Activated B cell treated with CpG ODN at 0.5 μM for 24 hours (primary cell): ENCODE measurements at regions of chr10 and their contacts with region 1.

Region 1: DNA sequence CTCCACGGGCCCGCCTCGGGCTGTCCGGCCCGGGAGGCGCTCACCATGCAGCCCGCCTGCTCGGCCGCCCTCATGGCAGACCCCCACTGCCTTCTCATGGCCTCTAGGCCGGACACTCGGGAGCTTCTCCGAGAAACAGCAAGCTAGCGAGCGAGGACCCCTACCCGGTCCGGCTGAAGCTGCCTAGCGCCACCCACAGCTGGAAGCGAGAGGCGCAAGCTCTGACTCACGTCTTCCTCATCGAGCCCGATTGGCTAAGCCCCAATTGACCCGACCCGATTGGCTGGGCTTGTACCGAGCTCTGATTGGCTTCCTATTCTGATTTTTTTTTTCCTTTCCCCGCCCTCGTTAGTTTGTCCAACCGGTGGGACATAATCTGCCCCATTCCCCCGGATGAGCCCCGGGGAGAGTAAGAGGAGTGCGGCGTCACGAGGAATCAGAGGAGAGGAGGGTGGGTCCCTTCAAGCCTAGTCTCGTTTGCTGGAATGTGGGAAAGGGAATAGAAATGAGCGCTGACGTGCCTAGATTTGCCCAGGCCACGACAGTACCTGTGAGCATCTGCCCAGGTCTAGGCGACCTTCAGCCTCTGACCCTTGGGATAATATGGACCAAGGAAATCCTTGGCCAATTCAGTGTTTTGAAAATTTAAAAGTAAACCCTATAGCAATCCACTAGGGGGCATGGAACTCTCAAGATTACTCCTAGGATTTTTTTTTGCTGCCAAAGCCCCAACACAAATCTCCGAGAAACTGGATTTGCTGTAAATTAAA is at the start of gene TYSND1:
- DNase-seq: no peak
- ATAC-seq: peak; percentile 80
- H3K4me3 Mint-ChIP-seq: peak within 1 kb of the TSS; percentile 95
- H3K27ac Mint-ChIP-seq: peak within 1 kb of the TSS; percentile 96
- H3K4me1 Mint-ChIP-seq: peaks cover 27% of the 10 kb centered on the region
- H3K27me3 Mint-ChIP-seq: no peaks in the 10 kb centered on the region
- CTCF ChIP-seq: no peak
- total RNA-seq, gene TYSND1: 18.2 and 22.0 TPM in 2 replicates

Region 2: DNA sequence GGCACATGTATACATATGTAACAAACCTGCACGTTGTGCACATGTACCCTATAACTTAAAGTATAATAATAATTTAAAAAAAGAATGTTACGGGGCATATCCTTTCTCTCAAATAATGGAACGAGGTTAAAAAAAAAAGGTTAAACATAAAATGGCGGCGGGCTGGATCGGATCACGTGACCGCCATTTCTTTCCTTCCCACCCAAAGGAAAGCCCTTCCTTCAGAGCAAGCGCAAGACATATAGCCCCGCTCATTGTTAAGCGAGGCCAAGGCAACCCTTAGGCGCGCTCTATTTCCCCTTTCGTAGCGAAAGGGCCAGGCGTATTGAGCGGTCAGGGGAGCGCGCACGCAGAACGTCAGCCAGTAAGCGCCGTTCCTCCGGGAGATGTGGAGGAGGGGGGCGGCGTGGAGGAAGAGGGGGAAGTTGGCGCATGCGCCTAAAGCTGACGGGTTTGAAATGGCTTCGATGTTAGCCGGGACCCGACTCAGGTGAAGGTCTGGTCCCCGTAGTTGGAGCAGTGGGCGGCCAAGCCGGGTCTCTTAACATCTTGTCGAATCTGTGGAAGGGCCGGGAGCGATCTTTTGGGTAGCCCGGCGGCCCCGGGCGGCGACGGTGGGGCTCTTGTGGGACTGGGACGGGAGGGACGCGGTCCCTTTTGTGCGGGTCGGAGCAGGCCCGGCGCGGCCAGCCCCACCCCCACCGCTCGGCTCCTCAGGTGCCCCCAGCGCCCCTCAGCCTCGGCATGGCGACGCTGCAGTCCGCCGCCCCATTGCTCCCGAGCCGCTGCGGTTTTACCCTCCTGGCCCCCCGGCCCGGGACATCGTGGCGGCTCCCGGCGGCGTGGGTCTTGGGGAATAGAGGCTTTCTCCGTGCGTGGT is 1425.6 kb before region 1 on chr10 and contains the start of gene CCAR1:
- CTCF ChIA-PET with region 1: no interaction called
- POLR2A ChIA-PET with region 1: no interaction called
- intact Hi-C with region 1: loop called (anchors 5 kb)
- DNase-seq: peak; percentile 93
- ATAC-seq: peak; percentile 98
- H3K4me3 Mint-ChIP-seq: peak within 1 kb of the TSS; percentile 92
- H3K27ac Mint-ChIP-seq: peak within 1 kb of the TSS; percentile 98
- H3K4me1 Mint-ChIP-seq: peaks cover 14% of the 10 kb centered on the region
- H3K27me3 Mint-ChIP-seq: no peaks in the 10 kb centered on the region
- CTCF ChIP-seq: no peak
- total RNA-seq, gene CCAR1: 88.2 and 98.8 TPM in 2 replicates

Region 3: DNA sequence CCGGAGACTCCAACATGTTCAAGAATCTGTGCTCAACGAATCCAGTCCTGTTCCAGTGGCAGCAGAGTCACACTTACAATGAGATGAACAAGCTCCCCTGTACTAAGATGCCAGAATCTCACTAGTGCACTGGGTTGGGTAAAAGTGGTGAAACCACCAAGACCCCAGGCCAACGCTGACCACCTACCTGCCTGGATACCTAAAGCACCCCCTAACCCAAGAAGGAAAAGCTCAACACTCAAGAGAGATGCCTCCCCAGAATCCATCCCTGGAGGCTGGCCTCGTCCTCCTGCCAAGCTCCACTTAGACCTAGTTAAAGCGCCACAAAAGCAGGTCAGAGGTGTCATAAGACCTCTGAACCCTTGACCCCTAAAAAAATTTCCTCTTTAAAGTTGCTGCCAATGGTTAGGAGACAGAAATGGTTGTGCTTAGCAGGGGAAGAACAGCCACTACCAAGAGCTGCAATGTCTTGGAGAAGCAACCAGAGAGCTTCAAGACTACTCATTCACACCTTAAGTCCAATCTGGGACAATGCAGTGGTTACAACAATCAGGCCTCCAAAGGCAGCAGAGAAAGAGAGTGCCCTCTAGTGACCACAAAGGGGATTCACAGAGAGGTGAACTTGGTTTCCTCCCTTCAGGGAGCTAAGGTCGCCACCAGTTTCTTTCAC is 188.7 kb before region 1 on chr10:
- CTCF ChIA-PET with region 1: interaction called, 7 read pairs
- POLR2A ChIA-PET with region 1: no interaction called
- intact Hi-C with region 1: loop called (anchors 5 kb)
- DNase-seq: no peak
- ATAC-seq: no peak
- H3K4me3 Mint-ChIP-seq: no peak overlapping the region
- H3K27ac Mint-ChIP-seq: no peak overlapping the region
- H3K4me1 Mint-ChIP-seq: peaks cover 39% of the 10 kb centered on the region
- H3K27me3 Mint-ChIP-seq: no peaks in the 10 kb centered on the region
- CTCF ChIP-seq: no peak

Region 4: DNA sequence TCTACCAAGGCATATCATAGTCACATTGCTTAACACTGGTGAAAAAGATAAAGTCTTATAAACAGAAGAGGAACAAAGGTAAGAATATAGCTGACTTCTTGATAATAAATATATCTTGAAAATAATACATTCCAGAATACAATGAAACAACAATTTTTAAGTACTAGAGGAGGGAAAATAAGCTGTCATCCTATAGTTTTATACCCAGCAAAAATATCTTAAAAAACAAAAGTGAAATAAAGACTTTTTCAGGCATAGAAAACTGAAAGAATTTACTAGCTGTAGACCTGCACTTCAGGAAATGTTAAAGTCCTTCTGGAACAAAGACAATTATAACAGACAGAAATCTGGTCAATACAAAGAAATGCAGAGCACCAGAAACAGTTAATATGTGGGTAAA is 115.5 kb before region 1 on chr10:
- CTCF ChIA-PET with region 1: no interaction called
- POLR2A ChIA-PET with region 1: no interaction called
- intact Hi-C with region 1: no loop called
- DNase-seq: no peak
- ATAC-seq: no peak
- H3K4me3 Mint-ChIP-seq: no peak overlapping the region
- H3K27ac Mint-ChIP-seq: no peak overlapping the region
- H3K4me1 Mint-ChIP-seq: no peaks in the 10 kb centered on the region
- H3K27me3 Mint-ChIP-seq: peaks cover 10% of the 10 kb centered on the region
- CTCF ChIP-seq: no peak

Region 5: DNA sequence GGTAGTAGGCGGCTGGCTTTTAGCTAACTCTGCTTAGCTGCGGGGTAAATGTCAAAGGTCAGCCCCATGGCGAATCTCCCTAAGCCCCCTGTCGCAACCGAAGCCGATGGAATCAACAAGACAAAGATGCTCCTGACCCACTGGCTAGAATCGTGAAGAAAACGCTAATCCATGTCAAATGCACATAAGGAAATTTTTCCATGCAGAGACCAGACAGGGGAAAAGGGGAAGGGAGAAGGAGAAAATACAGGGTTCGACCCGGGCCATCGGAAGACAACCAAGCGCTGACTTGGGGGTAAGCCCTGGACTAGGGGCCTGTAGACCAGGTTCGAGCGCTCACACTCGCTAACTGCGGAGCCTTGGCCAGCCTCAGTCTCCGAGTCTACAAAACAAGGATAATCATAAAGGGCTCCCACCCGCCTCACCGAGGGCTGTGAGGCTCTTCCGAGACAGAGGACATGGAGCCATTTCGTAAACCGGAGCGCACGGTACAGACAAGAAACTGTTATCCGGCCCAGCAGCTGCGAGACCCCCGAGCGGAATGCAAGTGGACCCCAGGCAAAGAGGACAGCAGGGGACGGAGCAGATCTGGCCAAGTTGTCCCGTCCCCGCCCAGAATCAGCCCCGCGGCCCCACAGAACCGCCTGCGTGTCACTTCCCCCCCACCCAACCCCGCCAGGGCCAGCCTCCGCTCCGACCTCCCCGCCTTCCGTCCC is 23.1 kb after region 1 on chr10:
- CTCF ChIA-PET with region 1: interaction called, 17 read pairs
- POLR2A ChIA-PET with region 1: interaction called, 106 read pairs
- intact Hi-C with region 1: loop called (anchors 1 kb)
- DNase-seq: no peak
- ATAC-seq: peak; percentile 29
- H3K4me3 Mint-ChIP-seq: peak overlapping the region; percentile 94
- H3K27ac Mint-ChIP-seq: peak overlapping the region; percentile 93
- H3K4me1 Mint-ChIP-seq: peaks cover 43% of the 10 kb centered on the region
- H3K27me3 Mint-ChIP-seq: no peaks in the 10 kb centered on the region
- CTCF ChIP-seq: no peak

Region 6: DNA sequence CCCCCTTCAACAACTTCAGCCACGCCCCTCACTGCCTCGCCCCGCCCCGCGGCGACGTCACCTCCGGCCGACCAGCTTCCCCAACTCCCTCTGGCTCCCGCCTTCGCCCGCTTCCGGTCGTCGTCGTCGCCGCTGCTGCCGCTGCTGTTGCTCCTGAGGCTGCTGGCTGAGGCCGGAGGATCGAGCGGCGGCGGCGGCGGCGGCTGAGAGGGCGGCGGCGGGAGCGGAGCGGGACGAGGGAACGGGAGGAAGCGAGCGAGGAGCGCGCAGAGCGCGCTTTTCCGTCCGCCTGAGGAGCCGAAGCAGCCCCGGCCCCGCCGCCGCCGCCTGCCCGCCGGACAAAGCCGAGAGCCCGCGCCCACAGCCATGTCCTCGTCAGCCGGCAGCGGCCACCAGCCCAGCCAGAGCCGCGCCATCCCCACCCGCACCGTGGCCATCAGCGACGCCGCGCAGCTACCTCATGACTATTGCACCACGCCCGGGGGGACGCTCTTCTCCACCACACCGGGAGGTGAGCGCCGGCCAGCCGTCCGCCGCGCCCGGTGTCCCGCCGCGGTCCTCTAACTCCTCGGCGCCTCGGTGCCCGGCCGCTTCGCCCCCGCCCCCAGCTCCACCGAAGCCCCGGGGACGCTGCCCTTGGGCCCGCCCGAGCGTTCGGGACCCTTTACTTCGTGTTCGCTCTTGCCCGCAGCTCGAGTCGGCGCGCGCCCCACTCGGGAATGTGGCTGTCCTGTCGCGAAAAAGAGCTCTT is 257.5 kb after region 1 on chr10 and contains the start of gene EIF4EBP2:
- CTCF ChIA-PET with region 1: interaction called, 9 read pairs
- POLR2A ChIA-PET with region 1: interaction called, 4 read pairs
- intact Hi-C with region 1: loop called (anchors 1 kb)
- DNase-seq: peak; percentile 100
- ATAC-seq: peak; percentile 98
- H3K4me3 Mint-ChIP-seq: peak within 1 kb of the TSS; percentile 92
- H3K27ac Mint-ChIP-seq: peak within 1 kb of the TSS; percentile 80
- H3K4me1 Mint-ChIP-seq: peaks cover 32% of the 10 kb centered on the region
- H3K27me3 Mint-ChIP-seq: no peaks in the 10 kb centered on the region
- CTCF ChIP-seq: no peak
- total RNA-seq, gene EIF4EBP2: 38.7 and 40.6 TPM in 2 replicates

Region 7: DNA sequence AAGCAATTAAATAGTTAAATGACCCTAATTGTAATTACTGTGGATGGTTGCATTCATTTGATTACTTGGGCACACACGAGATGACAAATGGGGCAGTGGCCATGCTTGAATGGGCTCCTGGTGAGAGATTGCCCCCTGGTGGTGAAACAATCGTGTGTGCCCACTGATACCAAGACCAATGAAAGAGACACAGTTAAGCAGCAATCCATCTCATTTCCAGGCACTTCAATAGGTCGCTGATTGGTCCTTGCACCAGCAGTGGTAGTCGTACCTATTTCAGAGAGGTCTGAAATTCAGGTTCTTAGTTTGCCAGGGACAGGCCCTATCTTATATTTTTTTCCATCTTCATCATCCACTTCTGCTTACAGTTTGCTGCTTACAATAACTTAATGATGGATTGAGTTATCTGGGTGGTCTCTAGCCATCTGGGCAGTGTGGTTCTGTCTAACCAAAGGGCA is 733.4 kb after region 1 on chr10:
- CTCF ChIA-PET with region 1: no interaction called
- POLR2A ChIA-PET with region 1: no interaction called
- intact Hi-C with region 1: loop called (anchors 10 kb)
- DNase-seq: peak; percentile 40
- ATAC-seq: peak; percentile 96
- H3K4me3 Mint-ChIP-seq: no peak overlapping the region
- H3K27ac Mint-ChIP-seq: peak overlapping the region; percentile 25
- H3K4me1 Mint-ChIP-seq: peaks cover 4% of the 10 kb centered on the region
- H3K27me3 Mint-ChIP-seq: no peaks in the 10 kb centered on the region
- CTCF ChIP-seq: peak; percentile 84